ENCODE measurements at regions of chr20 and their contacts with region 1.

Region 1: GRCh38 chr20:17873410-17874270 is 95.0 kb downstream of the SNX5 start:
- DNase-seq: peak; percentile 91
- ATAC-seq: peak; percentile 71
- H3K4me3 ChIP-seq: peak overlapping the region in 2 of 3 experiments; percentile 1 to 55; a peak in 3 of 6 replicates
- H3K27ac ChIP-seq: peak overlapping the region; percentile 78
- H3K4me1 ChIP-seq: peaks cover 86% of the 10 kb centered on the region
- H3K27me3 ChIP-seq: no peaks in the 10 kb centered on the region
- CTCF ChIP-seq: peak; percentile 12; the same call in 1 of the 2 replicates
- EP300 ChIP-seq: no peak; a peak in 1 of 4 replicates
- POLR2A ChIP-seq: peak; percentile 73 to 77
- RAD21 ChIP-seq: peak; percentile 11

Region 2: DNA sequence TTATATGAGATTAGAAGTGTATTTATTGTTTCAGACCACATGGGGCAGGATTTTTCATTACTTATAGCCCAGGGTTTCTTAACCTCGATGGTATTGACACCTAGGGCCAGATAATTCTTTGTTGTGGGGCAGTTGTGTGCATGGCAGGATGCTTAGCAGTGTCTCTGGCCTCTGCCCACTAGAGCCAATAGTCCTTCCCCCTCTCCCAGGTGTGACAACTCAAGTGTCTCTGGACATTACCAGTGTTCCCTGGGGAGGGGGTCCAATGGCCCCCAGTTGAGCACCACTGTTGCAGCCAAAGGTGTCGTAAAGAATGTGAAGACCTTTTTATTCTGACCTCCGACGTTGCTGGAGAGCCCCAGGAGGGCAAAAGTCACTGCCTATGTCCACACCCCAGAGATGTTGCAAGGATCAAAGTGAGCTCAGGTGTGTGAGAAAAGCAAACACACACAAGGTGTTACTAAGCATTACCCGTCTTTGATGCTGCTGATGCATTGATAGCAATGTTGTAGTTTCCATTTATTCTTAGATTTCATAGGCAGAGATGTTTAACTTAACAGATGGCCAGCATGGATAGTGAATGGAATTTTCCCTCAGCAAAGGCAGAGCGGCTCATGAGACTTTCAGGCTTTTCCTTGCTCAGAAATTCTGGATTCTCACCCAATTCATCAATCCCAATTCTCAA is 151.7 kb before region 1 on chr20:
- CTCF ChIA-PET with region 1: no interaction called
- POLR2A ChIA-PET with region 1: interaction called, 8 read pairs
- in situ Hi-C with region 1: no loop called
- intact Hi-C with region 1: loop called (anchors 1 kb)
- DNase-seq: peak; percentile 99
- ATAC-seq: peak; percentile 91
- H3K4me3 ChIP-seq: peak overlapping the region in 1 of 3 experiments; percentile 8; a peak in 2 of 6 replicates
- H3K27ac ChIP-seq: peak overlapping the region; percentile 55
- H3K4me1 ChIP-seq: peaks cover 44% of the 10 kb centered on the region
- H3K27me3 ChIP-seq: peaks cover 4 to 65% of the 10 kb centered on the region in 2 experiments; a peak in 4 of 5 replicates
- CTCF ChIP-seq: peak; percentile 35; the same call in 1 of the 2 replicates
- EP300 ChIP-seq: peak; percentile 99; a peak in 3 of 4 replicates
- POLR2A ChIP-seq: no peak
- RAD21 ChIP-seq: peak; percentile 59; the same call in 1 of the 2 replicates

Region 3: DNA sequence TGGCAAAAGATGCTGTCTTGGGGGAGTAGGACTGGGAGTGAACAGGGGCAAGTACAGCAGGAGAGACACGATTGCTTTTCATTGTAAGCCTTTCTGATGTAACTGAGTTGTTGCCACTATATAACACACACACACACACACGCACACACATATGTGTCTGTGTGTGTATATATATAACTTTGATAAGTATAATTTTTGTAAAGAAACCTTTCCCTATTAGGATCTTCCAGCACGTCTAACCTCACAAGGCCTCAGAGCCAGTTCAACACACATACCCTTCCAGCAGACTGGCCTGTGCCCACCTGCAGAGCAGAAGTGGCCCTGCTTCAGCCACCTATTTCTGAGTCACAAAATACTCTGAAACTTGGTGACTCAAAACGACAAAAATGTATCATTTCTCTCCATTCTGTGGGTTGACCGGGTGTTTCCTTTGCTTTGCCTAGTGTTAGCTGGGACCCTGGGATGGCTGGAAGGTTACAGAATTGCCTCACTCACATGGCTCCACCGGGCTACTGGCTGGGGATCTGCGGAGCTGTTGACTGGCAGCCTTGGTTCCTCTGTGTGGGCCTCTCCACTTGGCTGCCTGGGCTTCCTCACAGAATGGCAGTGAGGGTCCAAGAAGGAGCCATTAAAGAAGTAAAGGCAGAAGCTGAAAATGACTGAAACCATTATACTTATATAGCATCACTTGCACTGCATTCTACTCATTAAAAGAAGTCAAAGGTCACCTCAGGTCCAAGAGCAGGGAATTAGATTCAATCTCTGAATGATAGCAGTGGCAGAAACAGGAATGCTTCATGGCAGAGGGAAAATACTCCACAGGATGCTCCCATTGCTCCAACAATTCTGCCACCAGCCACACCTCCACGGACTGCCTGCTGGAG is 47.4 kb before region 1 on chr20:
- CTCF ChIA-PET with region 1: no interaction called
- POLR2A ChIA-PET with region 1: interaction called, 12 read pairs
- in situ Hi-C with region 1: no loop called
- intact Hi-C with region 1: no loop called
- DNase-seq: peak; percentile 44
- ATAC-seq: peak; percentile 10; the same call in 1 of the 3 replicates
- H3K4me3 ChIP-seq: no peak overlapping the region
- H3K27ac ChIP-seq: no peak overlapping the region
- H3K4me1 ChIP-seq: peaks cover 88% of the 10 kb centered on the region
- H3K27me3 ChIP-seq: no peaks in the 10 kb centered on the region; a peak in 1 of 5 replicates
- CTCF ChIP-seq: no peak
- EP300 ChIP-seq: no peak
- POLR2A ChIP-seq: no peak
- RAD21 ChIP-seq: no peak

Region 4: DNA sequence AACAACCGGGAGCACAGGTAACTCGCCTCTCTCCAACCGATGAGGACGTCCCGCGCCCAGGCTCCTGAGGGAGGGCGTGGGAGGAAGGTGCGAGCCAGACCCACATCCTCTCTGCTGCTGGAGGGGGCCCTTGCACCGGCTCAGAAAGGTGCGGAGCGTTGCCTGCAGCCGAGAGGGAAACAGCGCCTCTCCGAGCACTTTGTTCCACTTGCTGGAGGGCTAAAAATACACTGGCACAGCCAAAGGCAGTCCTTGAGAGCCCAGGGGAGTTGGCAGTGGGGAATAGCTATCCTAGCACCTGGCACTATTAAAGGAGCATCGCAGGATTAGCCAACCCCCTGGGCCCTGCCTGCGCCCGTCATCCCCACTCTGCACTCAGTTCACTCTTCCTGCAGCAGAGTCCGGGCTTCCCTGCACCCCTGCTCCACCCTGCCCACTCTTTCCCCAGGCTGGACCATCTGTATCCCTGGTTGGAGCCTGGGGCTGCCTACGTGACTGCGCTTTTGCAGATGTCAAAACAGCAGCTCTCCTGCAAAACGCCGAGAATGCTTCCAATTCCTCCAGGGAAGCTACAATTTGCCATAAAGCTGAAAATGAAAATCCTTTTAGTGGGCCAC is 13.9 kb before region 1 on chr20:
- CTCF ChIA-PET with region 1: no interaction called
- POLR2A ChIA-PET with region 1: interaction called, 763 read pairs
- in situ Hi-C with region 1: no loop called
- intact Hi-C with region 1: loop called (anchors 1 kb)
- DNase-seq: no peak
- ATAC-seq: no peak; the same call in 1 of the 3 replicates
- H3K4me3 ChIP-seq: peak overlapping the region in 1 of 3 experiments; percentile 17; a peak in 2 of 6 replicates
- H3K27ac ChIP-seq: peak overlapping the region; percentile 86
- H3K4me1 ChIP-seq: peaks cover 100% of the 10 kb centered on the region
- H3K27me3 ChIP-seq: no peaks in the 10 kb centered on the region
- CTCF ChIP-seq: peak; percentile 53
- EP300 ChIP-seq: no peak
- POLR2A ChIP-seq: no peak
- RAD21 ChIP-seq: peak; percentile 34; the same call in 1 of the 2 replicates

Region 5: GRCh38 chr20:17916433-17916891 is 42.8 kb after region 1 on chr20:
- CTCF ChIA-PET with region 1: no interaction called
- POLR2A ChIA-PET with region 1: no interaction called
- in situ Hi-C with region 1: no loop called
- intact Hi-C with region 1: no loop called
- DNase-seq: no peak
- ATAC-seq: no peak
- H3K4me3 ChIP-seq: no peak overlapping the region
- H3K27ac ChIP-seq: no peak overlapping the region
- H3K4me1 ChIP-seq: peaks cover 30% of the 10 kb centered on the region
- H3K27me3 ChIP-seq: peaks cover 0 to 11% of the 10 kb centered on the region in 2 experiments; a peak in 1 of 5 replicates
- CTCF ChIP-seq: no peak
- EP300 ChIP-seq: no peak
- POLR2A ChIP-seq: no peak
- RAD21 ChIP-seq: no peak

Measured in HepG2 (cell line).